Cardiac septum (tissue), 1 donor: ENCODE measurements at regions of chr12 and their contacts with region 1.

Region 1: GRCh38 chr12:107093417-107094182 is at the start of gene CRY1:
- DNase-seq: peak; percentile 97
- total RNA-seq, gene CRY1: 12.0 TPM

Region 2: GRCh38 chr12:106986625-106987430 is 106.8 kb before region 1 on chr12 and contains the start of gene MTERF2:
- intact Hi-C with region 1: loop called (anchors 2 kb)
- DNase-seq: peak; percentile 97
- total RNA-seq, gene MTERF2: 21.6 TPM